ENCODE measurements at regions of chr12 and their contacts with region 1.

Region 1: DNA sequence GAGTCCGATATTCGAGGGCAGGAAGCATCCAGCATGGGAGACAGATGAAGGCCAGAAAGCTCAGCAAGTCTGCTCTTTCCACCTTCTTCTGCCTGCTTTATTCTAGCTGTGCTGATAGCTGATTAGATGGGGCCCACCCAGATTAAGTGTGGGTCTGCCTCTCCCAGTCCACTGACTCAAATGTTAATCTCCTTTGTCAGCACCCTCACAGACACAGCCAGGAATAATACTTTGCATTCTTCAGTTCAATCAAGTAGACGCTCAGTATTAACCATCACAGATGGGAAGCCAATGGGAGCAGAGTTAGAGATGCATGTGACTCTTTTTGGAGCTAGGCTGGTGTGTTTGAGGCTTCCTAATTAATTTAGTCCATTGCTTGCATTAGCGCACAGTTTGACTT is 17.0 kb downstream of the C12orf75 start:
- DNase-seq: no peak
- H3K4me3 Mint-ChIP-seq: no peak overlapping the region
- H3K27ac Mint-ChIP-seq: no peak overlapping the region
- H3K4me1 Mint-ChIP-seq: peaks cover 32% of the 10 kb centered on the region
- H3K27me3 Mint-ChIP-seq: no peaks in the 10 kb centered on the region
- CTCF ChIP-seq: no peak

Region 2: DNA sequence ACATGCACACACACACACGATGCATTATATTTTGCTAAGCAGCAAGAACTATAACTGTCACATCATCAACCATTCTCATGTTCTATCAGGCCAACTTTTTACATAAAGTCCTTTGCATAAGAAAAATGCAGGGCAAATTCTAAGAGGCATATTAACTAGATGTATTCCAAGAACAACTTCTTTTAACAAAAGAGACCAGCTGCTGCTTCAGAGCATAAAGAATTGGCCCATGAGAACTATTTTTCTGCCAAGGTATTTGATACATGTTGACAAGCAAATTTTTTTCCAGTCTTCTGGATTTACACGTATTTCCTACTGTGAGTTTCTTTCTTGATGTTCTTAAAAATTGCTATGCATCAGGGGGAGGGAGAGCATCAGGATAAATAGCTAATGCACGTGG is 1324.7 kb before region 1 on chr12:
- CTCF ChIA-PET with region 1: interaction called, 14 read pairs
- intact Hi-C with region 1: no loop called
- DNase-seq: no peak
- H3K4me3 Mint-ChIP-seq: no peak overlapping the region
- H3K27ac Mint-ChIP-seq: no peak overlapping the region
- H3K4me1 Mint-ChIP-seq: no peaks in the 10 kb centered on the region
- H3K27me3 Mint-ChIP-seq: peaks cover 43% of the 10 kb centered on the region
- CTCF ChIP-seq: no peak

Region 3: DNA sequence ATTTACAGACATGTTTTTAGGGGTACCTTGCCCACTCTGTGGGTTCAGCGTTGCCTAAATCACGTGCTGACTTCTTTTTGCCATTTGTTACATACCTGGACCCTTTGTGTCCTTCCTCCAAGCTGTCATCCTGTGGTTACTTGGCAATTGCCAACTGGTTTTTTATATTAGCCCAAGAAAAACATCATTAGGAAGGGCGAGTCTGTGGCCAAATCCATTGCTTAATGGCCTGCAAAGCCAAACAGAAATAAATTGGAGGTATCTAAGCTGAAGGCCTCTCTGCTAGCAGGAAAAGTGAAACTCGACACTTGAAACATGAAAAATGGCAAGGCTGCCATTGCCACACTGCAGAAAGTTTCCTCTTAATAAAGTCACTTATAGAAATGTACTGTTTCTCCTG is 600.8 kb after region 1 on chr12:
- CTCF ChIA-PET with region 1: no interaction called
- intact Hi-C with region 1: no loop called
- DNase-seq: no peak
- H3K4me3 Mint-ChIP-seq: no peak overlapping the region
- H3K27ac Mint-ChIP-seq: no peak overlapping the region
- H3K4me1 Mint-ChIP-seq: no peaks in the 10 kb centered on the region
- H3K27me3 Mint-ChIP-seq: peaks cover 4% of the 10 kb centered on the region
- CTCF ChIP-seq: no peak